ENCODE measurements at regions of chr2 and their contacts with region 1.

Region 1: DNA sequence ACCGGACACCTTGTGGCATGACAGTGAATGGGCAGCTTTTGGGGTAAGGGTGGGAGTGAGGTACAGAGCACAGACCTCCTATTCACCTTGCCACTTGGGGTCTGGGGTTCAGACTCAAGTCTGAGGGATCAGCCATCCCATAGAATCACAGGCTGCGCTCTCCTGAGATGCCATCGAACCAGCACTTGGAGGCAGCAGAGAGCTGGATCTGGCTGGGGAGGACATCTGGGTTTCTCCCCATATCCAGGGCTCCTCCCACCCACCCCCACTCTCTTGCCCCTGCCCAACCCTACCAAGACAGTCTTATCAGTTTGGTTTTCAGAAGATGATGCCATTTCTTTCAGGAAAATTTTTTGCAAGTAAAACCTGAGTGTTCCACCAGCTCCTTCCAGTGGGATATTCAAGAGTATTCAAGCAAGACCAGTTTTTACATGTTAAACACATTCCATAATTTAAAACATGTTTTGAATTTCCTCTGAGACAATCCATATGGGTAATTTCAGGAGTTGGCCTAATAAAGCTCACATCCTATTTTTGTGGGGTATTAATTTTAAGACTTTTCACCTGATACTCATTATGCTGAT is 29.2 kb upstream of the TEX44 start:
- DNase-seq: peak in 1 of 2 experiments; percentile 61
- H3K4me3 ChIP-seq: no peak overlapping the region
- H3K27ac ChIP-seq: no peak overlapping the region
- H3K4me1 ChIP-seq: no peaks in the 10 kb centered on the region
- H3K27me3 ChIP-seq: no peaks in the 10 kb centered on the region
- CTCF ChIP-seq: peak; percentile 62

Region 2: GRCh38 chr2:231601349-231602229 is 38.1 kb after region 1 on chr2:
- CTCF ChIA-PET with region 1: interaction called, 6 read pairs
- POLR2A ChIA-PET with region 1: no interaction called
- intact Hi-C with region 1: loop called (anchors 1 kb)
- DNase-seq: peak; percentile 67 to 80
- H3K4me3 ChIP-seq: no peak overlapping the region
- H3K27ac ChIP-seq: no peak overlapping the region
- H3K4me1 ChIP-seq: peaks cover 13% of the 10 kb centered on the region; the same call in 1 of the 2 replicates
- H3K27me3 ChIP-seq: no peaks in the 10 kb centered on the region
- CTCF ChIP-seq: peak; percentile 88